SK-N-SH (cell line): ENCODE measurements at regions of chr16 and their contacts with region 1.

Region 1: GRCh38 chr16:81403616-81404373 is 40.8 kb upstream of the CMIP start:
- DNase-seq: peak; percentile 91
- H3K4me3 ChIP-seq: peak overlapping the region; percentile 24 to 38; a peak in 3 of 4 replicates
- H3K27ac ChIP-seq: no peak overlapping the region
- H3K4me1 ChIP-seq: peaks cover 0 to 2% of the 10 kb centered on the region in 2 experiments; a peak in 1 of 4 replicates
- H3K27me3 ChIP-seq: no peaks in the 10 kb centered on the region
- CTCF ChIP-seq: peak; percentile 88
- EP300 ChIP-seq: no peak
- RAD21 ChIP-seq: peak; percentile 97

Region 2: DNA sequence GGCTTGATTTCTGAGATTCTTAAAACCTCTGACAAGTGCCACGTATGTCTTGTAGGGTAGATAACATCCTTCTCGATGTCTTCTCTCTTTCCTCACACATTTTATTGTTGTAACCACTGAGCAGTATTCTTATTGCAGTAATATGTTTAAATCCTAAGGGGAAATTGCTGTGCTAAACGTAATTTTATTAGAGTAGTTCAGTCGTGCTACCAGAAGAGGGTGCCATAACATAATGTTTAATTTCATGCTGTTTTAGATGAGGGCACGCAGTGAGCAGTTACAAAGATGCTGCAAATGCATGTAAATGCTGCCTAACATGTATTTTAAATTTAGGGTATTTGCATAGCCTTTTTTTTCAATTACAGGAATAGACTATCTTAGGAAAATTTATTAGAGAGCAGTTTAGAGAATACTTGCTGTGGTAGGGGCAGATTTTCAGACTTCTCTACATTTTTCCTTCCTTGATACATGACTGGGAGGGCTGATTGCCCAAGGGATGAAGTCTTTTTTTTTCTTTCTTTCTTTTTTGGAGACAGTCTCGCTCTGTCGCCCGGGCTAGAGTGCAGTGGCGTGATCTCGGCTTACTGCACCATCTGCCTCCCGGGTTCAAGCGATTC is 37.4 kb before region 1 on chr16:
- CTCF ChIA-PET with region 1: interaction called, 16 read pairs
- POLR2A ChIA-PET with region 1: no interaction called
- DNase-seq: peak; percentile 63
- H3K4me3 ChIP-seq: no peak overlapping the region
- H3K27ac ChIP-seq: no peak overlapping the region
- H3K4me1 ChIP-seq: no peaks in the 10 kb centered on the region
- H3K27me3 ChIP-seq: no peaks in the 10 kb centered on the region
- CTCF ChIP-seq: peak; percentile 80
- EP300 ChIP-seq: no peak
- RAD21 ChIP-seq: peak; percentile 90

Region 3: GRCh38 chr16:81457326-81458133 is 53.7 kb after region 1 on chr16:
- CTCF ChIA-PET with region 1: no interaction called
- POLR2A ChIA-PET with region 1: no interaction called
- DNase-seq: no peak
- H3K4me3 ChIP-seq: no peak overlapping the region
- H3K27ac ChIP-seq: 0 out of 4 replicates have a peak overlapping the region, but pooled peaks of 1 of the 2 experiments have one; percentile 12
- H3K4me1 ChIP-seq: peaks cover 0 to 16% of the 10 kb centered on the region in 2 experiments; a peak in 1 of 4 replicates
- H3K27me3 ChIP-seq: no peaks in the 10 kb centered on the region
- CTCF ChIP-seq: no peak
- EP300 ChIP-seq: no peak
- RAD21 ChIP-seq: no peak

Region 4: DNA sequence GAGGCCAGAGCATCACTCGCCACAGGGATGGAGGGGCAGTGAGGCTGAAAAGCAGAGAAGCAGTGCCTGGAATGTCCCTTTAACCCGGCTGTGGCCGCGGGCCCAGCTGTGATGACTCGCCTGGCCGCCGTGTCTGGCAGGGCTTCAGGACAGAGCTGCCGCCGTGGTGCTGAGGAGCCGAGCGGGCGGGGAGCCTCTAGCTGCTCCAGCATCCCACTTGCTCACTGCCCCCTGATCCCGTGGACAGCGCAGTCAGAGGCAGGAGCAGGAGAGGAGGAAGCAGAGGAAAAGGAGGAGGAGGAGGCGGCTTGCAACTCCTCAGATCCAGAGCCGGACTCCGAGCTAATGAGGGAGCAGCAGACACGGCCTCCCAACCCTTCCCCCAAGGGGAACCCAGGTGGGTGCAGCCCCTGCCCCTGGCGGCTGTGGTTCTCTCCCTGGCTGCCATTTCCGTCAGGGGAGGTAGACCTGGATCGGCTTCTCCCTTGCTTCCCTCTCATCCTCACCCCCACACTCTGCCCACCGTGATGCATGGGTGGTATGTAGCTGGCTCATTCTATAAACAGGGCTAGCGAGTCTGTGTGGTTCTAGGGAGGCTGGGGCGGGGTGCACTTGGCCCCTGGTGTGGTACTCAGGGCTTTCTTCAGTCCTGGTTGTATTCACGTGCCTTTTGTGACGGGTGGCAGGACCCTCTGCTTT is 206.5 kb after region 1 on chr16:
- CTCF ChIA-PET with region 1: interaction called, 15 read pairs
- POLR2A ChIA-PET with region 1: no interaction called
- DNase-seq: peak; percentile 87
- H3K4me3 ChIP-seq: no peak overlapping the region
- H3K27ac ChIP-seq: peak overlapping the region in 1 of 2 experiments; percentile 48; a peak in 2 of 4 replicates
- H3K4me1 ChIP-seq: peaks cover 0 to 27% of the 10 kb centered on the region in 2 experiments; a peak in 1 of 4 replicates
- H3K27me3 ChIP-seq: no peaks in the 10 kb centered on the region
- CTCF ChIP-seq: no peak
- EP300 ChIP-seq: no peak
- RAD21 ChIP-seq: no peak

Region 5: DNA sequence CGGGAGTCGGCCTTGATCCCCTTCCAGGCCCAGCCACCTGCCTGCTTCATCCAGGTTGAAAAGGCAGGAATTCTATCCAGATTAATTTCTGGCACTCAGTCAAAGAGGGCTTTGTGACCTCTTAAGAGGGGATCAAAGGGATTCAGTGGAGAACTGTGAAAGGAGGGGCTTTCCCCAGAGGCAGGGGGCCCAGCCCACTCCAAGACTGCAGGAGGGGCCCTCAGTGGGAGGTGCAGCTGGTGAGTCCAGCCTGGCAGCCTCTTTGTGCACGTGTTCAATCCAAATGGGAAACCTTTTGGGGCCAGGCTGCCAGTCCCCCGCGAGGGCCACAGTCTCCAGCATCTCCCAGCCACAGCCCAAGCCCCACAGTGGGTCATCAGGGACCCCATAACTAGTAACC is 226.9 kb after region 1 on chr16:
- CTCF ChIA-PET with region 1: interaction called, 10 read pairs
- POLR2A ChIA-PET with region 1: no interaction called
- DNase-seq: no peak
- H3K4me3 ChIP-seq: no peak overlapping the region
- H3K27ac ChIP-seq: no peak overlapping the region
- H3K4me1 ChIP-seq: peaks cover 5 to 12% of the 10 kb centered on the region in 2 experiments; a peak in 1 of 4 replicates
- H3K27me3 ChIP-seq: no peaks in the 10 kb centered on the region
- CTCF ChIP-seq: no peak
- EP300 ChIP-seq: no peak
- RAD21 ChIP-seq: no peak

Region 6: GRCh38 chr16:81723098-81723723 is 319.4 kb after region 1 on chr16:
- CTCF ChIA-PET with region 1: interaction called, 35 read pairs
- POLR2A ChIA-PET with region 1: no interaction called
- DNase-seq: peak; percentile 83
- H3K4me3 ChIP-seq: peak overlapping the region in 1 of 2 experiments; percentile 4; a peak in 1 of 4 replicates
- H3K27ac ChIP-seq: no peak overlapping the region
- H3K4me1 ChIP-seq: no peaks in the 10 kb centered on the region
- H3K27me3 ChIP-seq: no peaks in the 10 kb centered on the region; the same call in 1 of the 2 replicates
- CTCF ChIP-seq: peak; percentile 75
- EP300 ChIP-seq: no peak
- RAD21 ChIP-seq: peak; percentile 96